ENCODE measurements at regions of chr3 and their contacts with region 1.

Region 1: DNA sequence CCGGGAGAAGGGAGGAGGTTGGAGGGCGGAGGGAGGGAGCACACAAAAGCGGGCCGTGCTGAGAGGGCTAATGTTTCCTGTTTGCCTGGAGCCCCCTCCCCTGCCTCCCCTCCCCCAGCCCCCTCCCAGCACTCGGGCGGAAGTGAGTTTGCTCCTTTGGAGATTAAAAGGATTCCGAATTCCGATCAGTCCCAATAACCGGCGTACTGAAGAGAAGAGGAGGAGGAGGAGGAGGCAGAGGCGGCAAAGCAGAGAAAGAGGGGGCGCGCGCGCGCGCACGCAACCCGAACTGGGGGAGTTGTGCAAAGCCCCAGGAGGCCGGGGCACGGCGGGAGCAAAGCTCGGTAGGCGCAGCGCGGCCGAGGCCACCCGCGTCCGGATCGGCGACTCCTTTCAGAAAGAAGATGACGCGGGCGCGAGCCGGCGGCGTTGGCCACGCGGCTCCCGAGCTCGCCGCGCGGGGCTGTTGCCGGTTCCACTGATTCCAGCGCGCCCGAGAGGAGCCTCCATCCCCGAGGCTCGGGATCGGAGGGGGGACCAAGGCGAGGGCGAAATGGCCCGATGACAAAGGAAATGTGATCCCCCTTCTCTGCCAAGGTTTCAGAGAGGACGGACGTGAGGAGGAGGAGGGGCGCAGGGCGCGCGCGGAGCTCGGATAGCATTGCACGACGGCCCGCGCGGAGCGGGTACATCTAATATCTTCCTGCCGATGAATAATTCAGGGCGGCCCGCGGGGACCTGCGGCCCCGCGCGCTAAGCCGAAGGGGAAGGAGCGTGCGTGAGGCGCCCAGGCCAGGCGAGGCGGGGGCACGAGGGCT is 1.1 kb upstream of the TRIM71 start:
- DNase-seq: peak; percentile 22
- H3K4me3 Mint-ChIP-seq: peak overlapping the region; percentile 69
- H3K27ac Mint-ChIP-seq: no peak overlapping the region
- H3K4me1 Mint-ChIP-seq: peaks cover 27% of the 10 kb centered on the region
- H3K27me3 Mint-ChIP-seq: peaks cover 53% of the 10 kb centered on the region

Region 2: GRCh38 chr3:32471246-32471645 is 345.4 kb before region 1 on chr3:
- CTCF ChIA-PET with region 1: no interaction called
- intact Hi-C with region 1: no loop called
- DNase-seq: no peak
- H3K4me3 Mint-ChIP-seq: no peak overlapping the region
- H3K27ac Mint-ChIP-seq: peak overlapping the region; percentile 63
- H3K4me1 Mint-ChIP-seq: peaks cover 43% of the 10 kb centered on the region
- H3K27me3 Mint-ChIP-seq: no peaks in the 10 kb centered on the region

Region 3: GRCh38 chr3:32794487-32795308 is 21.9 kb before region 1 on chr3:
- CTCF ChIA-PET with region 1: no interaction called
- intact Hi-C with region 1: loop called (anchors 1 kb)
- DNase-seq: no peak
- H3K4me3 Mint-ChIP-seq: no peak overlapping the region
- H3K27ac Mint-ChIP-seq: no peak overlapping the region
- H3K4me1 Mint-ChIP-seq: no peaks in the 10 kb centered on the region
- H3K27me3 Mint-ChIP-seq: peaks cover 2% of the 10 kb centered on the region

Region 4: DNA sequence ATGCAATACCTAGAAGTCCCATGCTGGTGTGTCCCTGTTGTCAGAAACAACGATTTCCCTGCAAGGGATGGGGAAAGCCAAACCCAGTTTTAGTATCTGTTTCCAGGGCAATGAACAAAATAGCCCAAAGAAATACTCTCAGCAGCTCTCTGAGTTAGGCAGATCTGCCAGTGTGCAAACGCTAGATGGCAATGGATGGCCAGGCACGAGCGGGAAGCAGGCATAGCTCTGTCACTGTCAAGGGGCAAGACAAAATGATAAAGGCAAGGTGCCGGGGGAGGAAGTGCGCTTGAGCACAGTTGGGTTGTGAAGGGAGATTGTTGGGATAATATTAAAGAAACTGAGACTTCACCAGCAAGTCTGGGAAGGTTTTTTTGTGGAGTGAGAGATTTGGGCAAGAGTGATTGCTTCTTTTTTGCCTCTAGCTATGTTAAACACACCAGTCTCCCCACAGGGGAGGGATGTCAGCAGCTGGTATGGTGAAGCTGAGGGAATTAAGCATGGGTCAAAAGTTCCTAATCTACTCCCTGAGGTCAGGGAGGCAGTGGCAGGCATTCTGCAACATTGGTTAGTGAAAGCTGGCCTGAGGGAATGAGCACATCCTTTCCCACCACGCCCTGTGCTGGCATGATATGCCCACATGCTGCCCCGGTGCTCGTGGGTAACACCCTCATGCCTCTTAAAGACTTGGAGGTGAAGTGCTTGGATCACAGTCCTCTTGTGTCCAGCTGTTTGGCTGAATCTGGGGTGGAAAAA is 1099.3 kb after region 1 on chr3:
- CTCF ChIA-PET with region 1: no interaction called
- intact Hi-C with region 1: no loop called
- DNase-seq: peak; percentile 25
- H3K4me3 Mint-ChIP-seq: no peak overlapping the region
- H3K27ac Mint-ChIP-seq: no peak overlapping the region
- H3K4me1 Mint-ChIP-seq: no peaks in the 10 kb centered on the region
- H3K27me3 Mint-ChIP-seq: no peaks in the 10 kb centered on the region

Measured in activated naive CD4-positive, alpha-beta T cell treated with anti-CD3 and anti-CD28 coated beads for 36 hours (primary cell).